GM18951 (cell line): ENCODE measurements at regions of chr19 and their contacts with region 1.

Region 1: GRCh38 chr19:16247353-16248182 is 49.9 kb downstream of the AP1M1 start:
- POLR2A ChIP-seq: no peak

Region 2: DNA sequence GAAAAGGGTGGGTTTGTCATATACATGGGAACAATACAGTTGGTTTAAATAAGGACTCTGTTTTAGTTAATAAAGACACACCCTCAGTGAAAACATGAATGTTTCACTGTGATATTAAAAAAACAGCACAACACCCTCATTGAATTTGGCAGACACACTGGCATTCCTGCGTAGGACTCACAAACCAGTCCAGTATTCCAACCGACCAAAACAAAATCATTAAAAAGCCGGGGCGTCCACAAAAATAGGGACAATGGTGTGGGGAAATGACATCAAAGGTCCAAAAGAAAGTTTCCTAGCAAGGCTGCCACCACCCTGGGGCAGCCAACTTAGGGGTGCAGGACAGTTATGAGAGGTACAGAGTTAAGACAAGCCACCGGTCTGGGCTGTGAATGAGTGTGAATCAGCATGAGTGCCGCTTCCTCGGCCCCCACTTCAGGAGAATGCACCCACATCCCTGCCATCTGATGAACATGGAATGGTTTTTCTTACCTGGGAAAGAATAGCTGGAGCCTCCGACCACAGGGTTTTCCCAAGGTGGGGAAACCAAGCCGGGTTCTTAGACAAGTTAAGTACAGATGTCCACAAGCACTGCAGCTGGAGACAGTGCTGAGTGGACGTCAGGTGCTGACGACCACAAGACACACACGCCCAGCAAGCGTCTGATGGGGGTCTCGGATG is 150.4 kb after region 1 on chr19:
- in situ Hi-C with region 1: loop called (anchors 10 kb)
- POLR2A ChIP-seq: no peak